H1 (cell line): ENCODE measurements at regions of chr12 and their contacts with region 1.

Region 1: DNA sequence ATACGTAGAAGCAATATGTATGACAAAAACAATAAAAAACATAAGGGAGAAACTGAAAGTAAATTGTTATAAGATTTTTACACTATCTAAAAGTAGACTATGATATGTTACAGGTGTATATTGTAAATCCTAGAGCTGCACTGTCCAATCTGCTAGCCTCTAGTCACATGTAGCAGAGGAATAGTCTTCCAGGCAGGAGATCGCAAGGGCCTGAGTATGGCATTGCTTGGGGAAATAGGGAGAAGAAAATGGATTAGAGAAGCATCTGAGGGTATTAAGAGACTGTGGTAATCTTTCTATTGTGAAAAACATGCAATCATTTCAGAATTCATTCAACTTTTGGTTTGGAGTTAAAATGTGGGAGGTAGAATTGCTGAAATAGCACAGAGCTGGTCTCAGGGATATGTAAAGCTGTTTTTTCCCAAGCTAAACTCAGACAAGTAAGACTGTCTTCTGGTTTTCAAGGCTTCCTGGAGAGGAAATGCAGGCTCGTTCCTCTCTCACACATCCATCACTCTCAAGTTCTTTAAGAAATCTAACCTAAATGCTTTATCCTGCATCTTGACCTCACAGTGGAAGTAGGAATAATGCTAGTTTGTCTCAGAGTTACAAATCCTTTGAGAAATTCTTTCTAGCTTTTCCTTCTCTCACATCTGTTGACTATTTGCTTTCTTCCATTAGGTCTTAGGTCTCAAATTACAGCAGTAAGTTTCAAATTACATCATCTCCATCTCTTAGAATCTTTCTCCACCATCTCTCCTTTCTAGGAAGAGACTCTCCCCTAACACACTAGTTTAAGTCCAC is 7.6 kb upstream of the CCDC184 start:
- DNase-seq: no peak
- H3K4me3 ChIP-seq: peak overlapping the region in 1 of 4 experiments; percentile 39; a peak in 3 of 8 replicates
- H3K27ac ChIP-seq: no peak overlapping the region
- H3K4me1 ChIP-seq: peaks cover 0 to 8% (median 1%) of the 10 kb centered on the region in 4 experiments; a peak in 3 of 7 replicates
- H3K27me3 ChIP-seq: no peaks in the 10 kb centered on the region; a peak in 1 of 7 replicates
- CTCF ChIP-seq: no peak
- EP300 ChIP-seq: no peak
- POLR2A ChIP-seq: no peak
- RAD21 ChIP-seq: no peak

Region 2: DNA sequence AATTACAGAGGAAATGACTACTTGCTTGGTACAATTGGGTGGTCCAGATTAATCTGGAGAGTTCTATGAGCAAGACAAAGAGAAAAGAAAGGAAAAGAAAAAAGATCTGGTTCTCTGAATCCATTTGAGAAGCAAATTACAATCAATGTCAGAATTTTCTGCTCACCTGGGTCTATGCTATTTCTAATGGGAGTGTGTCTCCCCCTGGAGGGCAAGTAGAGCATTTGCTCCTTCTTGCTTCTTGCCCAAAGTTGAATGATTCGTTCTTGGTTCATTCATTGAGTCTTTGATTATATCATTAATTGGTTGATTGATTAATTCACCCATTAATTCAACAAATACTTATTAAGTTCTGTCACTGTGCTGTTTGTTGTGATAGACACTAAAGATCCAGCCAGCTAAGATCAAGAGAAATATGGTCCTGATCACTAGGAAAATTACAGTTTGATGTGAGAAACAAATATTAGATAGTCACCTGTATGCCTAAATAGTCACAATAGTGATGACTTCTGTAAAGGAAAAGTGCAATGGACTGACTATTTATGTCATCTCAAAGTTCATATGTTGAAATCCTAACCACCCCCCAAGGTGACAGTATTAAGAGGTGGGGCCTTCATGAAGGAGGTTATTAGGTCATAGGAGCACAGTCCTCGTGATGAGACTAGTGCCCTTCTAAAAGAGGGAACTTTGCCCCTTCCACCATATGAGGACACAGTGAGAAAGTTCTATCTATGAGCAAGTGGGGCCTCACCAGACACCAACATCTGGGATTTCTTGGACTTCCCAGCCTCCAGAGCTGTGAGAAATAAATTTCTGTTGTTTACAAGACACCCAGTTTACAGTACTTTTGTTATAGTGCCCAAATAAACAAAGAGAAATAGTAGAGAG is 10.5 kb before region 1 on chr12:
- CTCF ChIA-PET with region 1: interaction called, 40 read pairs
- POLR2A ChIA-PET with region 1: interaction called, 3 read pairs
- DNase-seq: no peak
- H3K4me3 ChIP-seq: no peak overlapping the region
- H3K27ac ChIP-seq: no peak overlapping the region
- H3K4me1 ChIP-seq: no peaks in the 10 kb centered on the region; a peak in 1 of 7 replicates
- H3K27me3 ChIP-seq: no peaks in the 10 kb centered on the region
- CTCF ChIP-seq: peak in 2 of 3 experiments; percentile 76 to 87; a peak in 3 of 4 replicates
- EP300 ChIP-seq: no peak
- POLR2A ChIP-seq: no peak
- RAD21 ChIP-seq: peak; percentile 92

Region 3: GRCh38 chr12:48189331-48190125 is 13.7 kb after region 1 on chr12:
- CTCF ChIA-PET with region 1: interaction called, 13 read pairs
- POLR2A ChIA-PET with region 1: interaction called, 7 read pairs
- DNase-seq: peak in 1 of 2 experiments; percentile 84
- H3K4me3 ChIP-seq: no peak overlapping the region
- H3K27ac ChIP-seq: no peak overlapping the region
- H3K4me1 ChIP-seq: peaks cover 2 to 13% (median 7%) of the 10 kb centered on the region in 4 experiments; a peak in 6 of 7 replicates
- H3K27me3 ChIP-seq: peaks cover 2 to 16% (median 11%) of the 10 kb centered on the region in 4 experiments; a peak in 6 of 7 replicates
- CTCF ChIP-seq: peak in 2 of 3 experiments; percentile 74 to 86; a peak in 3 of 4 replicates
- EP300 ChIP-seq: no peak
- POLR2A ChIP-seq: no peak
- RAD21 ChIP-seq: peak; percentile 83 to 92

Region 4: DNA sequence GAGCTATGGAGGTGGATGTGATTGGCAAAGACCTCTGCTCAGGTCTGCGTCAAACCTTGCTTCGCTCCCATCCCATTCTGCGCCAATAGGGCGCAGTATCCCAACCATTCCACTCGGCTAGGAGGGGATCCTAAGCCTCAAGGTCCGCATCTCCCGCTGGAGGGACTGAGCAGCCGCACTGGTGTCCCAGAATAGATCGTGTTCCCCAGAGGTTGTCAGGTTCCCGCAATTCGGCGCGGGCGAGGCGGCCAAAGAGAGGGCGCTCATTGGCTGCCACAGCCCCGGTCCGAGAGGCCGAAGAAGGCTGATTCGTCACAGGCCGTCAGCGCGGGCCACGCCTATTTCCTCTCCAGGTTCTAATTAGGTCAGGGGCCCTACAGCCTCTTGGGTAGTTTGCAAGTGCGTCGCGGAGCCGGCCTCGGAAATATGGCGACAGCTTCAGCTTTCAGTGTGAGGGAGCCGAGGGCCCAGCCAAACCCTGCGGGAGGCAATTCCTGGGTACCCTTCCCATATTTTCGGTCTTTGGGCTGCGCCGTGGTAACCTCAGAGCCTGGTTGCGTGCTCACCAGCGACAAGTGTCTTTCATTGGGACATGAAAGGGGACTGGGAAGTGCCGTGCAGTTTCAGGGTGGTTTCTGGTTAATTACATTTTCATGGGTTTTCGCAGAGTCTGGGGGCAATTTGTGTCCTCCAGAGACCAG is 22.3 kb after region 1 on chr12:
- CTCF ChIA-PET with region 1: interaction called, 12 read pairs
- POLR2A ChIA-PET with region 1: interaction called, 5 read pairs
- DNase-seq: peak; percentile 92 to 93
- H3K4me3 ChIP-seq: peak overlapping the region; percentile 63 to 90 (median 76)
- H3K27ac ChIP-seq: peak overlapping the region; percentile 66; the same call in 1 of the 2 replicates
- H3K4me1 ChIP-seq: peaks cover 0 to 2% (median 2%) of the 10 kb centered on the region in 4 experiments; a peak in 2 of 7 replicates
- H3K27me3 ChIP-seq: peaks cover 5 to 23% (median 23%) of the 10 kb centered on the region in 4 experiments
- CTCF ChIP-seq: peak; percentile 11 to 48 (median 39); a peak in 2 of 4 replicates
- EP300 ChIP-seq: no peak
- POLR2A ChIP-seq: peak; percentile 71 to 93
- RAD21 ChIP-seq: peak; percentile 17 to 29; a peak in 3 of 4 replicates